GM12878 (cell line): ENCODE measurements at regions of chr1 and their contacts with region 1.

Region 1: DNA sequence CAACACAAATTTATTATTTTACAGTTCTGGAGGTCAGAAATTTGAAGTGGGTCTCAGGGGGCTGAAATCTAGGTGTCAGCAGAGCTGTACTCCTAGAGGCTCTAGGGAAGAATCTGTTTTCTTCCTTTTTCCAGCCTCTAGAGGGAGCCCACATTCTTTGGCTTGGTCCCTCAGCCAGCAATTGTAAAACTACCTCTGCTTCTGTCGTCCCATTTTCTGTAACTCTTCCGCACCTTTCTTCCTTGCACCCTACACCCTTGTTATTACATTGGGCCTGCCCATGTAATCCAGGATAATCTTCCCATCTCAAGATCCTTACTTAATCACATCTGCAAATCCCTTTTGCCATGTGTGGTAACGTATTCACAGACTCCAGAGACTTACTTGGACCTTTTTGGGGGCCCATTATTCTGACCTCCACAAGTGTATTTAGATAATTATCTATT is 24.8 kb upstream of the THEM4 start:
- DNase-seq: no peak
- ATAC-seq: peak; percentile 93
- H3K4me3 ChIP-seq: no peak overlapping the region
- H3K27ac ChIP-seq: no peak overlapping the region
- H3K4me1 ChIP-seq: peaks cover 8% of the 10 kb centered on the region
- H3K27me3 ChIP-seq: peaks cover 0 to 1% of the 10 kb centered on the region in 2 experiments; a peak in 1 of 4 replicates
- CTCF ChIP-seq: peak; percentile 79 to 87 (median 83)
- EP300 ChIP-seq: no peak
- POLR2A ChIP-seq: no peak
- RAD21 ChIP-seq: peak; percentile 88

Region 2: DNA sequence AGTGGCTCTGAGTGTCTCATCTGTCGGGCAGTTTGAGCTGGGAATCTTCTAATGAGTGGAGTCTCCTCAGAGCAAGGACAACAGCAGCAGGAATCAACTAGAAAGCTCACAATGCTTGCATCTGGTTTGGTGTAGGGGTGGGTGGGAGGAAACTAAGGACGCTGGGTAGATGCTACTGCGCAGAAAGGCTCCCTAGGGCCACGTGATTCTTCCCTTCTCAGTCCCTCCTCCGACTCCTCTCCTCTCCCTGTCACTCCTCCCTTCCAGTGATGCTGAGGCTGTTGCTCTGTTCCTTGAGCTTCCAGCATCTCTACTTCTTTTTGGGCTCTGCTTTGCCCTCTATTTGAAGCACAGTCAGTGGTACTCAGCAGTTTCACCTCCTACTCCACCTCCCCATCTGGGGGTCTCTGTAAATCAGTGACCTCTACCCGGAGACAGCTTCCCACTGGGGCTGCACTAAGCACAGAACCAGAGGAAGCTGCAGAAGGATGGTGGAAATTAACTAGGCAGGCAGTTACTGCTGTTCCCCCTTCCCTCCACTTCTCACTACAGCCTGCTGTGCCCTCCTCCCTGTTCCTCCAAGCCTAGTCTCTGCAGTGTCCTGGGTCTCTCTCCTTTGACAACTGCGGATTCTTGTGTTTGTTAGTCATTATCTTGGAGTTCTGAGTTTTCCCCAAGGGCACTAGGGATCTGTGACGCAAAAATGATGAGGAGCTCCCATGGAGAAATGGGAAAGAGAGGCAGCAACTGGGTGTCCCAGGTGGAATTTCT is 134.7 kb before region 1 on chr1:
- CTCF ChIA-PET with region 1: no interaction called
- POLR2A ChIA-PET with region 1: no interaction called
- RAD21 ChIA-PET with region 1: no interaction called
- SMC1A ChIA-PET with region 1: no interaction called
- in situ Hi-C with region 1: no loop called
- intact Hi-C with region 1: no loop called
- DNase-seq: no peak
- ATAC-seq: 0 out of 3 replicates have a peak, but pooled peaks have one; percentile 29
- H3K4me3 ChIP-seq: no peak overlapping the region
- H3K27ac ChIP-seq: no peak overlapping the region
- H3K4me1 ChIP-seq: peaks cover 3% of the 10 kb centered on the region; the same call in 1 of the 2 replicates
- H3K27me3 ChIP-seq: peaks cover 0 to 11% of the 10 kb centered on the region in 2 experiments; a peak in 2 of 4 replicates
- CTCF ChIP-seq: no peak
- EP300 ChIP-seq: no peak
- POLR2A ChIP-seq: no peak
- RAD21 ChIP-seq: no peak

Region 3: GRCh38 chr1:151888972-151889570 is 45.0 kb before region 1 on chr1:
- CTCF ChIA-PET with region 1: interaction called, 5 read pairs
- POLR2A ChIA-PET with region 1: no interaction called
- RAD21 ChIA-PET with region 1: no interaction called
- SMC1A ChIA-PET with region 1: interaction called, 4 read pairs
- in situ Hi-C with region 1: no loop called
- intact Hi-C with region 1: loop called (anchors 5 kb)
- DNase-seq: no peak
- ATAC-seq: peak; percentile 61
- H3K4me3 ChIP-seq: no peak overlapping the region
- H3K27ac ChIP-seq: no peak overlapping the region
- H3K4me1 ChIP-seq: no peaks in the 10 kb centered on the region
- H3K27me3 ChIP-seq: no peaks in the 10 kb centered on the region
- CTCF ChIP-seq: peak; percentile 21 to 43 (median 42); a peak in 4 of 6 replicates
- EP300 ChIP-seq: no peak
- POLR2A ChIP-seq: no peak
- RAD21 ChIP-seq: peak; percentile 50

Region 4: GRCh38 chr1:151909150-151910149 is 24.6 kb before region 1 on chr1 and contains the start of gene THEM4:
- CTCF ChIA-PET with region 1: interaction called, 10 read pairs
- POLR2A ChIA-PET with region 1: no interaction called
- RAD21 ChIA-PET with region 1: interaction called, 8 read pairs
- SMC1A ChIA-PET with region 1: interaction called, 4 read pairs
- in situ Hi-C with region 1: no loop called
- intact Hi-C with region 1: no loop called
- DNase-seq: peak; percentile 79
- ATAC-seq: peak; percentile 99
- H3K4me3 ChIP-seq: peak within 1 kb of the TSS; percentile 84
- H3K27ac ChIP-seq: peak within 1 kb of the TSS; percentile 78
- H3K4me1 ChIP-seq: no peaks in the 10 kb centered on the region
- H3K27me3 ChIP-seq: no peaks in the 10 kb centered on the region
- CTCF ChIP-seq: peak; percentile 24 to 36 (median 33); a peak in 4 of 6 replicates
- EP300 ChIP-seq: no peak
- POLR2A ChIP-seq: peak; percentile 93
- RAD21 ChIP-seq: peak; percentile 37; the same call in 1 of the 2 replicates
- polyA plus RNA-seq, gene THEM4: 3.4 to 7.2 TPM

Region 5: DNA sequence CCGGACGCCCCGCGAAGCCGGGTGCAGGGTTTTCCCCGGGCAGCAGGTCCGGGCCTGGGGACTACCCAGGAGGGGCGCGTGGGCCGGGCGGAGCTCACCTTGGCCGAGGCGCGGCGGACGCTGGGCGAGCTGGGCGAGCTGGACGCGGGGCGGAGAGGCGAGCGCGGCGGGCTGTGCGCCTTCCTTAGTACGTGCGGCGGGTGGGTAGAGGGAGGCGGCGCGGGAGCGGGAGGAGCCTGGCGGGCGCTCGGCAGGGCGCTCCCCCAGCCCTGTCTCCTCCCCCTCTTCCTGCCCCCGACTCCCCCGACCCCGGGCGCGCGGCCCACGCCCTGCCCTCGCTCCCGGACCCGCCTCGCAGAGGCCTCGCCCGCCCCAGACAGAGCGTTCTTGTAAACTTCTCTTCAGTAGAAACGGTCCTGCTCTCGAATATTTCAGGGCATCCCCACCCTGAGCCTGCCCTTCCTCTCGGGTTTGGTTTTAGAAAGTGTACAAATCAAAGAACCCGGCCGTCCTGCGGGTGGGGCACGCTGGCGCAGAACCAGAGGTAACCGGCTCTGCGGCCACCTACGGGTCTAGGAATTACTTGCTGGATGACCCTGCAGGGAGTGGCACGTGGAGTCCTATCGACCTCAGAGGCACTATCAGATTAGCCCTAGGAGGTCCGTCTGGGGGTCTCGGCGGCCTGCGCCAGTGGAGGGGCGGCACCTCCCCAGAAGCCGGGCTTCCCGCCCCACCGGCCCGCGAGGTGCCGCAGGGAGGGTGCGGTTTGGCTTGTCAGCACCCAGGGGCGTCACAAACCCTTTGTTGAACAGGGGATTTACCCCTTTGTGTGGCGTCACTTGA is 59.8 kb after region 1 on chr1 and contains the start of gene S100A10:
- CTCF ChIA-PET with region 1: interaction called, 122 read pairs
- POLR2A ChIA-PET with region 1: no interaction called
- RAD21 ChIA-PET with region 1: interaction called, 5 read pairs
- SMC1A ChIA-PET with region 1: interaction called, 13 read pairs
- in situ Hi-C with region 1: loop called (anchors 5 kb)
- intact Hi-C with region 1: loop called (anchors 1 kb)
- DNase-seq: no peak
- ATAC-seq: peak; percentile 66
- H3K4me3 ChIP-seq: peak within 1 kb of the TSS; percentile 47; the same call in 1 of the 2 replicates
- H3K27ac ChIP-seq: no peak within 1 kb of the TSS
- H3K4me1 ChIP-seq: peaks cover 11% of the 10 kb centered on the region; the same call in 1 of the 2 replicates
- H3K27me3 ChIP-seq: peaks cover 17 to 37% of the 10 kb centered on the region in 2 experiments
- CTCF ChIP-seq: no peak
- EP300 ChIP-seq: no peak
- POLR2A ChIP-seq: no peak
- RAD21 ChIP-seq: no peak
- polyA plus RNA-seq, gene S100A10: 0.18 to 0.50 TPM